Activated CD4-positive, alpha-beta memory T cell treated with anti-CD3 and anti-CD28 coated beads for 36 hours (primary cell): ENCODE measurements at regions of chr4 and their contacts with region 1.

Region 1: GRCh38 chr4:41214136-41214824 is at the start of gene APBB2:
- DNase-seq: peak; percentile 70
- H3K4me3 Mint-ChIP-seq: peak within 1 kb of the TSS; percentile 76
- H3K27ac Mint-ChIP-seq: no peak within 1 kb of the TSS
- H3K4me1 Mint-ChIP-seq: peaks cover 28% of the 10 kb centered on the region
- H3K27me3 Mint-ChIP-seq: peaks cover 50% of the 10 kb centered on the region
- total RNA-seq, gene APBB2: 1.5 to 1.7 TPM

Region 2: DNA sequence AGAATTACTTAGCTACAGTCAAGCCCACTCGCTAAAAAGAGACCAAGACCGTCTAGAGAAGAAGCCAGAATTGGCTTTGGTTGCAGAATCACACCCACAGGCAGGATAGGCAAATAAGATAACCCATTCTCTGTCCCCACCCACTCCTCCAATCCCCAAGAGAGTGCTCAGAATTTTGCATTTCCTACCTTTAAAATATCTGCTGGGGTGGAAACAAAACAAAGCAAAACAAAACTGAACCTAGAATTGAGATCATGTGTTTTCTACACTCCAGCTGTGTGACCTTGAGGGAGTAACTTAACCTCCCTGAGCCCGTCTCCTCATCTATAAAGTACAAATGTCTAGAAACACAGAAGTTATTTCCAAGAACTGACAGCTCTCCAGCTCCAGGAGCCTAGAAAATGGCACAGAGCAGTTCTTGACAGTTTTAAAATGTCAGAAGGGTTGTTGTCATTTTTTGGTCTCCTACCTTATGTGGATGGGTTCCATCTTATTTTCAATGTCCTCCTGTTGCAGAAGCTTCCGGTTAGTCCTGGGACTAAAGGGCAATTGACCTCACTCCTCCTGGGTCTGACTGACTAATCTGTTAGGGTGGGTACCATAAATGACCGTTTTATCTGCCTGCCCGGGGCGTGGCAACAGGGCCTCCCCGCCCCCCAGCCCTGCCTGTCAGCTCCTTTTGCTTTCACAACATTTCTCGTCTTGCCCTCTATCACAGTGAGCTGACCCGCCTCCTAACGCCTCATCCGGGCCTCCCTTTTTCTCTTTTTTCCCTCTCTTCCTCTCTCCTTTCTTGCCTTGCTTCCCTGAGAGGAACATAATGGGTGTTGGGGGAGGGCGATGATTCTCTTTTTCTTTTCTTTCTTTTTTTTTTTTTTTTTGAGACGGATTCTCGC is 698.6 kb before region 1 on chr4:
- CTCF ChIA-PET with region 1: no interaction called
- POLR2A ChIA-PET with region 1: no interaction called
- intact Hi-C with region 1: no loop called
- DNase-seq: peak; percentile 25
- H3K4me3 Mint-ChIP-seq: no peak overlapping the region
- H3K27ac Mint-ChIP-seq: peak overlapping the region; percentile 28
- H3K4me1 Mint-ChIP-seq: peaks cover 17% of the 10 kb centered on the region
- H3K27me3 Mint-ChIP-seq: peaks cover 1% of the 10 kb centered on the region

Region 3: DNA sequence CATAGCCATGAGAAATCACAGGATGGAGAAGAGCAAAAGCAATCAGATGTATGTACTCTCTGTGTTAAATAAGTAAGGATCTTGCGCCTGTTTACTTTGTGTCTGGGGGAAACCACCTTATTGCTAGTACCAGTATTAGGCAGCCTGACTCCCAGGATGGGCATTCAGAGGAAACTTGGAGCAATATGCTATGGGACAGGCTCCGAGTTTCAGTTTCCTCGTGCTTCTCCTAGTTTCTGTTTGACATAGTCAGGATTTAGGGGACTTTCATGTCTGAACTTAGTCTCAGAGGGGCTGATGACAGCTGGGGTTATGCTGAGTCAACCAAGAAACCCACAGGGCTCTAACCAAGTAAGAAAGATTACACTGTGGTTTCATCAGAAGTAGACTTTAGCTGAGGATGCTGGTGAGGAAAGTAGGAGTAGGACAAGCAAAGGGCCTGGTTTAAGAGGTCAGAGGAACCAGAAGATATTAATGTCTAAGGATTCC is 451.0 kb before region 1 on chr4:
- CTCF ChIA-PET with region 1: no interaction called
- POLR2A ChIA-PET with region 1: no interaction called
- intact Hi-C with region 1: loop called (anchors 10 kb)
- DNase-seq: peak; percentile 76
- H3K4me3 Mint-ChIP-seq: no peak overlapping the region
- H3K27ac Mint-ChIP-seq: peak overlapping the region; percentile 16
- H3K4me1 Mint-ChIP-seq: peaks cover 11% of the 10 kb centered on the region
- H3K27me3 Mint-ChIP-seq: peaks cover 4% of the 10 kb centered on the region

Region 4: DNA sequence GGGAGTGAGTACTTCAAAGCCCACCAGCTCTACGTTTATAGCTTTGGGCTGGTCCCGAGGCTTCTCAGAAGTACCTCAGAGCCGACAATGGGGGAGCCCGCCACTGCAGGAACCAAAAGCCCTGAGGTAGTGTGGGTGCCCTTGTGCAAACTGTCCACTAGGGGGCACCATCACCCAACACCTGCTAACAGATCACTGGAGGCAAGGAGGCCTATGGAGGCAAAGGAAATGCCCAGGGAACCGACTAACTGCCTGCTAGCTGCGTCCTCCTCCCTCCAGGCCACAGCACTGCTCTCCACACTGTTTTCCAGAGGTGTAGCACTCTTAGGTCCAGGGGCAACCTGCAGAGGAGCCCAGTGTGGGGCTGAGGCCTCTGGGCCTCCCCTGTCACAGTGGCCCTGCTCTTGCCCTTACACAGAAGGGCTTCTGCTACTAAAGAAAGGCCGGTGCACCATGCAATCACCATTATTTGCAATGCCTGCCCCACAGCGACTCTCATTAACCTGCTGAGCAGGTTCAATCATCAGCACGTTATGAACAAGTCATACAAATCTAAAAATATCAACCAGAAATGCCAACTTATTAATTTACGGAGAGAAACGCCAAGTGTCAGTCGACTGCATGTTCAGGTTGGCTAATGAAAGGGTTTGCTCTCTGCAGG is 305.4 kb before region 1 on chr4:
- CTCF ChIA-PET with region 1: no interaction called
- POLR2A ChIA-PET with region 1: no interaction called
- intact Hi-C with region 1: loop called (anchors 5 kb)
- DNase-seq: peak; percentile 86
- H3K4me3 Mint-ChIP-seq: no peak overlapping the region
- H3K27ac Mint-ChIP-seq: peak overlapping the region; percentile 83
- H3K4me1 Mint-ChIP-seq: peaks cover 23% of the 10 kb centered on the region
- H3K27me3 Mint-ChIP-seq: no peaks in the 10 kb centered on the region

Region 5: DNA sequence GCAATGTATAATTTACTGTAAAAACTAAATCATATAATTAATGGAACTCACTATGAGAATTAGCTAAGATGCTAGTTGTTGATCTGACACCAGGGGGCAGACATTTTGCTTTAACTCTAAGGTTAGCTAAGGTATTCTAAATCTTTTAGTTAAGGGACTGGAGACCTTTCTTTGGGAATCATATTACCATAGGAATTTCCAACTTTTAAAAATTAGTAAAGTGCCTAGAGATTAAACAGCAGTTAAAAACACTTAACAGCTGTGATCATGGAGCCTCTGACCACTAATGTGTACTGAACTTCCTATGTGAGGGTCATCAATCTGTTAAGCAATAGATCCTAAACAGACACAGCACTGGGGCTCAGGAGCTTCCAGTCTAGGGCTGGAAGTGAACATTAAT is 237.9 kb before region 1 on chr4:
- CTCF ChIA-PET with region 1: interaction called, 7 read pairs
- POLR2A ChIA-PET with region 1: no interaction called
- intact Hi-C with region 1: loop called (anchors 1 kb)
- DNase-seq: no peak
- H3K4me3 Mint-ChIP-seq: no peak overlapping the region
- H3K27ac Mint-ChIP-seq: no peak overlapping the region
- H3K4me1 Mint-ChIP-seq: no peaks in the 10 kb centered on the region
- H3K27me3 Mint-ChIP-seq: peaks cover 3% of the 10 kb centered on the region